ENCODE measurements at regions of chr10 and their contacts with region 1.

Region 1: GRCh38 chr10:5094265-5095205 is at the start of gene AKR1C3:
- DNase-seq: no peak
- H3K4me3 Mint-ChIP-seq: peak within 1 kb of the TSS; percentile 55
- H3K27ac Mint-ChIP-seq: no peak within 1 kb of the TSS
- H3K4me1 Mint-ChIP-seq: peaks cover 9% of the 10 kb centered on the region
- H3K27me3 Mint-ChIP-seq: peaks cover 2% of the 10 kb centered on the region
- total RNA-seq, gene AKR1C3: 0.33 to 0.47 TPM

Region 2: DNA sequence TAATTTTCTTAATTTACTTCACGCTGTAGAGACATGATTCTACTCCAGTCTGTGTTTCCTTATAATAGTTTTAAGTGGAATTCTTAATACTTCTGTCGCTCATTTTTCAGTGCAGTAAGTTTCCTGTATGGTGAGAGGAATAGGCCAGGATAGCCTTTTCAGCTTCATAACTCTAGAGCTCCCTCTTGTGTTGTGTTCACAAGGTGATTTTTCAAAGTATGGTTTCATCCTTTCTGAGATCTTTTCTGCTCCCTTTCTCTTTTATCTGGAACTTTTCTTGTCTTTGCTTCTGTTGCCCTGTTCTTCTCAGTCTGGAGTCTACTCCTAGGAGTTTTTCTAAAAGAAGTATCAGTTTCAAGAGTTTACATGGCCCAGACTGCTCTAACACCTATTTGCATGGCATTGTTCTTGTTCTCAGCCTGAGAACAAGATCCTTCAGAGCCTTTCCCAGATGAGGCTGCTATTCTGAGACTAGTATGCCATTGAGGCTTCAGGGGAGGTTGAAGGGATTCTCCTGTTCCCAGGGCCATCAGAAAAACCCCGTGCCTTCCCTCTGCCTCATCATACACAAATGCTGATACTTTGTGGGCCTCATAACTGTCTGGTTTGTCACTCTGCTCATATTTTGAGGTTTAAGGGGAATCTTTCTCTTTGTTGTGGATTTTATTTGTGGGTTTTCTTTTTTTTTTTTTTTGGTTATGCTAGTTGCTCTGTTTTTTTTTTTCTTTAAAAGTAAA is 339.6 kb after region 1 on chr10:
- CTCF ChIA-PET with region 1: no interaction called
- intact Hi-C with region 1: loop called (anchors 5 kb)
- DNase-seq: no peak
- H3K4me3 Mint-ChIP-seq: no peak overlapping the region
- H3K27ac Mint-ChIP-seq: no peak overlapping the region
- H3K4me1 Mint-ChIP-seq: peaks cover 8% of the 10 kb centered on the region
- H3K27me3 Mint-ChIP-seq: no peaks in the 10 kb centered on the region

Measured in activated naive CD4-positive, alpha-beta T cell treated with anti-CD3 and anti-CD28 coated beads for 36 hours (primary cell).